Posterior cingulate gyrus (tissue), 11 donors: ENCODE measurements at regions of chr19 and their contacts with region 1.

Region 1: GRCh38 chr19:13861732-13862531 is 15.0 kb upstream of the NANOS3 start:
- DNase-seq: peak; percentile 88 to 99 (median 94)

Region 2: GRCh38 chr19:13597640-13598039 is 264.3 kb before region 1 on chr19:
- intact Hi-C with region 1: loop called (anchors 1 kb)
- DNase-seq: peak in 8 of 10 donors; percentile 23 to 91 (median 43)

Region 3: DNA sequence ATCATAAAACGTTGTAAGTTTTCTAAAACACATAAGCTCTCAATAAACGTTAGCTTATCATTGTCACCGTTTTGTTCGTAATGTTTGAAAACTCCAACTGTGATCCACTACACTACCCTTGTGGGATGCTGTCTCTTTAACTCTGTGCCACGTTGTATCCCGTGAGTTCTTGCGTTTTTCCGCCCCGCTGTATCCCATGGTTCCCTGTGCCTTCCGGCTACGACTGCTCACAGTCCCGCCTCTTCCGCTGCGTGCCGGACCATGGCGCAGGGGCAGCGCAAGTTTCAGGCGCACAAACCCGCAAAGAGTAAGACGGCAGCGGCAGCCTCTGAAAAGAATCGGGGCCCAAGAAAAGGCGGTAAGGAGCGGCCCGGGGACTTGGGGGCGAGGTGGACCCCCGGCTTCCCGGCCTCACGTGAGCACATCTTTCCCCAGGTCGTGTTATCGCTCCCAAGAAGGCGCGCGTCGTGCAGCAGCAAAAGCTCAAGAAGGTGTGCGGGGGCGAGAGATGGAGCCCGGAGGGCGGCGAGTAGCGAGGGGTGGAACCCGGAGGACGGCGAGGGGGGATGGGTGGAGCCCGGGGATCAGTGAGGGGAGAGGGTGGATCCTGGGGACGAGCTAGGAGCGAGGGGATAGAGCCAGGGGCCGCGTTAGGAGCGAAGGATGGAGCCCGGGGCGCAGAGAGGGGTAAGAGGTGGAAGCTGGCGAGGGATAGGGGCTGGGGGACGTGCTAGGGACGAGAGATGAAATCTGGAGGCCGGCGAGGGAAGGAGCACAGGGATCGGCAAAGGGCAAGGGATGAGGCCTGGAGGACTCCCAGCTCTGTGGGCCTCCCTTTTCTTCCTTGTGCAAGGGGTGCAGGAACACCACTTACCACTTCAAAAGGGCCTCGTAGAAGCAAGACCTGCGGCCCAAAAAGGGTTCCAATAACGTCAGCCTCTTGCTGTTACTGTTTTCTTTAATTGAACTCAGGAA is 87.4 kb before region 1 on chr19 and contains the start of gene C19orf53:
- intact Hi-C with region 1: no loop called
- DNase-seq: peak; percentile 87 to 99 (median 94)

Region 4: DNA sequence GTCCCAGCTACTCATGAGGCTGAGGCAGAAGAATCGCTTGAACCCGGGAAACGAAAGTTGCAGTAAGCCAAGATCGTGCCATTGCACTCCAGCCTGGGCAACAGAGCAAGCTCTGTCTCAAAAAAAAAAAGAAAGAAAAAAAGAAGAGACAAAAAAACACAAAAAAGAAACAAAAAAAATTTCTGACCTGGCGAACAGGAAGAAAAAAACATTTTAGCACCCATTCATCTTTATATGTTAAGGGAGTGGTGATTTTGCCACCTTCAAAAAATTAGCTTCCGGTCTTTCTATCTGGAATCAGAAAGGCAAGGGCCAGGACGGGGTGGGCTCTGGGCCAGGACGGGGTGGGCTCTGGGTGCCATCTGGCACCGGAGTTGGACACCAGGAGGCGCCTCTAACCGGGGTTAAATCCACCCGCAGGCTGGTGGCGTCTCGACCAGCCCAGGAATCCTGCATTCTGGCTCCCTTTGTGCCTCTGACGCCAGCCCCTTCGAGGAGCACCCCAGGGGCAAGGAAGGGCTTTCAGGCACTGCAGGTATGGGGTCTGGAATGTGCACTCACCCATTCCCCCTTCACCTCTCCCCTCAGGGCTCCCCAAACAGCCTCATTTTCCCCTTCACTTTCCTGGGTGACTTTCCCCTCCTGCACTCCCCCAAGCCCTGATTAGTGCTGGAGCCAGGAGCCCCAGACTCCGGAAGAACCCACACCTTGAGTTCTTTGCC is 77.0 kb before region 1 on chr19:
- intact Hi-C with region 1: loop called (anchors 2 kb)
- DNase-seq: peak in 9 of 10 donors; percentile 32 to 94 (median 66)

Region 5: DNA sequence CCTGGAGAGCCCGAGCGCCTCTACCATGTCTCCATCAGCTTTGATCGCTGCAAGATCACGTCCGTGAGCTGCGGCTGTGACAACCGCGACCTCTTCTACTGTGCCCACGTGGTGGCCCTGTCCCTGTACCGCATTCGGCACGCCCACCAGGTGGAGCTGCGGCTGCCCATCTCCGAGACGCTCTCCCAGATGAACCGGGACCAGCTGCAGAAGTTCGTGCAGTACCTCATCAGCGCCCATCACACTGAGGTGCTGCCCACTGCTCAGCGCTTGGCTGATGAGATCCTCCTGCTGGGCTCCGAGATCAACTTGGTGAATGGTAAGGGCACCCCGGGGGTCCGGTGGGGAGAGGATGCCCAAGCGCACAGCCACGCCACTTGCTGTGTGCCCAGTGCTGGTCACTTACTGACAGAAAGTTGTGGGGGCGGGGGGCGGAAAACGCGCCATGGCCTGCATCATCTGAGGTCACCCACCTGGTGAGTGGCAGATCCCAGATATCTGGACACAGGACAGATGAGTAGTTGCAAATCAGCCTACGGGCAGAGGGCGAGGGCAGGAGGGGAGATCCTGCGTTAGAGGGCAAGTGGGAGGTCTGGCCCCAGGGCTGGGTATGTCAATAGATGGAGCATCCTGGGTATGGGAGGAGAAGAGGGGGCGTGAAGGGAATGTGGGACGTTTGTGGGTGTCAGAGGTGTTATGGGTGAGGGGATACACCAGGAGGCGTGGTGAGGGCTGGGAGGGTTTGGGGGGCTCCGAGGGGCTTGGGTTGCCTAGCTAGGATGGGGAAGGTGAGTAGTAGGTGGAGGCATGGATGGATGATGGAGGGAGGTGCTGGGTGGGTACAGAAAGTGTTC is 56.9 kb before region 1 on chr19:
- intact Hi-C with region 1: loop called (anchors 2 kb)
- DNase-seq: peak in 7 of 10 donors; percentile 26 to 92 (median 47)